ENCODE measurements at regions of chr16 and their contacts with region 1.

Region 1: DNA sequence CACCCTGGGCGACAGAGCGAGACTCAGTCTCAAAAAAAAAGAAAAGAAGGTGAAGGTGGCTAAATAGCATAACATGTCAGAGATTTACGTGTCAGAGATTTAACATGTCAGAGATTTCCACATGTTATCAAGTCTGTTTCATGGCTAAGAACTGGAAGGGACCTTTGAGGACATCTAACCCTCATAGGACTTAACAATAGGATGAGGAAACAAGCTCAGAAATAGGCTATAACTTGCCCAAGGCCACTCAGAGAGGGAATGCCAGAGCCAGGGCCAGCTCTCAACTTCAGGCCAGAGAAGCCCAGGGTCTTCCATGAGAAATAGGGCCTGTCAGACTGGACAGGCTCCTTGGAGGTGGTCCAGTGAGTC is 26.8 kb upstream of the ZNF629 start:
- DNase-seq: no peak
- ATAC-seq: peak; percentile 4
- H3K4me3 Mint-ChIP-seq: peak overlapping the region; percentile 87
- H3K27ac Mint-ChIP-seq: peak overlapping the region; percentile 81
- H3K4me1 Mint-ChIP-seq: peaks cover 12% of the 10 kb centered on the region
- H3K27me3 Mint-ChIP-seq: no peaks in the 10 kb centered on the region

Region 2: DNA sequence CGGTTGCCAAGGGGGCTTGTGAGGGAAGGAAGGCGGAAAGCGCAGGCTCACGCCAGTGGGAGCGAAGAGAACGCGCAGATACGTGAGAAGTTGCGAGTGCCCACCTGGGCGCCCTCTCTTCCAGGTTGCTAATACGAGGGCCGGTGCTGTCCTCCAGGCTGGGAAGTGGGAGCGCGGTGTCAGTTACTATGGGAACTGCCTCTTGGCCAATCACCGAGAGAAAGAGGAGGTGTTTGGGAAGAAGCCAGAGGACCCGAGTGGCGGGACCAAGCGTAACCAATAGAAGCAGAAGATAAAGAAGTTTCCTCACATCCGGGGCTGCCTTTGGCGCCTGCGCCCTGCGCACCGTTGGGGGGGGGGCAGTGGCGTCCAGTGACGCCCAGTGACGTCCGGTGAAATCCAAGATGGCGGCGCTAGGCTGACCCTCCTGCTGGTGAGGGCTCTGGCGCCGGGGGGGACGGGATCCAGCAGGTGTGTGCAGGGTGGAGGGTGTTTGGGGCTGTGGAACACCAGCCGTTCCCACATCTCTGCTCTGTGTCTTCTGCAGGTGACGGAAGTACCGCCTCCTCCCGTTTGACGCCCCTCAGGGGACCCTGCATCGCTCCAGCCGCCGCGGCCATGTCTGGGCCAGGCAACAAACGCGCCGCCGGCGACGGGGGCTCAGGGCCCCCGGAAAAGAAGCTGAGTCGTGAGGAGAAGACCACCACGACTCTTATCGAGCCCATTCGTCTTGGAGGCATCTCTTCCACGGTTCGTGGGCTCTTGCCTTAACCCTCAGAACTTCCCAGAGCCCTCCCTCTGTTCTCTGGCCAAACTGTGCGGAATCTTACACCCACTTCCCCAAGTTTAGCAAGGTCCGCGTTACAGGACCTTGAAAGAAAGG is 51.6 kb before region 1 on chr16 and contains the starts of genes CFAP119 and RNF40:
- CTCF ChIA-PET with region 1: no interaction called
- POLR2A ChIA-PET with region 1: interaction called, 3 read pairs
- intact Hi-C with region 1: loop called (anchors 1 to 10 kb)
- DNase-seq: peak; percentile 94
- ATAC-seq: peak; percentile 98
- H3K4me3 Mint-ChIP-seq: peak within 1 kb of the TSS; percentile 90
- H3K27ac Mint-ChIP-seq: peak within 1 kb of the TSS; percentile 83
- H3K4me1 Mint-ChIP-seq: peaks cover 25% of the 10 kb centered on the region
- H3K27me3 Mint-ChIP-seq: no peaks in the 10 kb centered on the region
- total RNA-seq, gene CFAP119: 1.7 to 3.1 TPM
- total RNA-seq, gene RNF40: 72.3 to 85.5 TPM

Region 3: DNA sequence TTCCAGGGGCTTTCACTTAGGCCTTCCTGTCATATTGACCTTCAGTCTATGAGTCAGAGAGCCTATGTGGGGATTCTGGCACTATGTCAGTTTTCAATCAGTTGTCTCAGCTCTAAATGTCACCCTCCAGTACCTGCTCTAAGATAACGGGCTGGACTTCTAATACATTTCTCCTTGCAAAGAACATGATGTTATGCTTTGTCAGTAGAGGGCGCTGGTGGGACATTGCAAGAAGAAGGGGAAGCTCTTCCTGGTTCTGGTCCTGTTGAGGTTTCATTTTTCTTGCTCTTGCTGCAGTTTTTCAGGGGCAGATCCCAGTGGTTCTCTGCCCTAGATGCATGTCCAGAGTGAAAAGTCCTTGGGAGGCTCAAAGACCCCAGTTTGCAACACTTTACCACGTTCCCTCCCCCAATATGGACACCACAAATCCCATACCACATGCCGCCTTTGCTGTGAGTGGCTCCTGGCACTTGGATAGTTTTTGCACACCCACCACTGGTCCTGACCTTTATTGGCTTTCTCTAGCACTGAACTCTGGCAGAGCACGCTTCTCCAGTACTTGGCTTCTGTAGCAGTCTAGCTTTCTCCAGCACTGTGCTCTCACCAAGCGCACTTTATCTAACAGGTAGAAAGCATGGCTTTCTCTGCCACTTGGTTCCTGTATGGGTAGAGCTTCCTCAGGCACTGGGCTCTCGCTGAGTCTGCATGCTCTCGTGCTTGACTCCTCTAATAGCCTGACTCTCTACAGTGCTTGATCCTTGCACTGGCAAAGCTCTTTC is 31.1 kb after region 1 on chr16:
- CTCF ChIA-PET with region 1: interaction called, 13 read pairs
- POLR2A ChIA-PET with region 1: no interaction called
- intact Hi-C with region 1: no loop called
- DNase-seq: peak; percentile 89
- ATAC-seq: peak; percentile 88
- H3K4me3 Mint-ChIP-seq: peak overlapping the region; percentile 45
- H3K27ac Mint-ChIP-seq: peak overlapping the region; percentile 58
- H3K4me1 Mint-ChIP-seq: peaks cover 8% of the 10 kb centered on the region
- H3K27me3 Mint-ChIP-seq: no peaks in the 10 kb centered on the region

Region 4: DNA sequence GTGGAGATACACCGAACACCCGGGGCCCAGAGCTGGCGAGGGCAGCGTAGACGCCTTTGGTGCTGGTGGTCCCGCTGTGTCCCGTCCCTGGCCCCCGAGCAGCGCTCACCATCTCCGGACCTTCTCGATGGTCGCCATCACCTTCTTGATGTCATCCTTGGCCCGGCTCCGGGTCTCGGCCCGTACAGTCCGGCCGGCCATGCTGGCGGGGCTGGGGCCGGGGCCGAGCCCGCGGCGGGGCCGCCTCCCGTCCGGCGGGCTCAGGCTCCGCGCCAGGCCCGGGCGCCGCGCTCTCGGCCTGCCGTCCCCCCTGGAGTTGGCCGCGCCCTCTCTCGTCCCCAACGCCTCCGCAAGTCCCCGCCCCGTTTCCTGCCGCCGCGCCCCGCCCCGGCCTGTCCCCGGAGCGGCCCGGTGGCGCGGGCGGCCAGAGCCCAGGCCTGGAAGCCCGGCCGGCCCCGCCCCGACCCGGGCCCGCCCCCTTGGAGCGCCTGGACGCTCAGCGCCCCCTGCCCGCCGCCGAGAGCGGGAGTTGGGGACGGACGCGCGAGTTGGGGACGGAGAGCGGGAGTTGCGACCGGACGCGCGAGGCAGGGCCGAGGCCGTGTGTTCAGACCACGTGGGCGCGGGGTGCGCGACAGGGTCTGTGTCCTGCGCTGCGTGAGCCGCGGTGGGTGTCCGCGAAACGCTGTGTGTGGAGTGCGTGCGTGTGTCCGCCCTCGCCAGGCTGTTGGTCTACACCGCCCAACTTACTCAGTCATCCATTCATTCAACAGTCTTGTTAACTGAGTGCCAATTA is 80.1 kb after region 1 on chr16 and contains the start of gene BCL7C:
- CTCF ChIA-PET with region 1: interaction called, 3 read pairs
- POLR2A ChIA-PET with region 1: no interaction called
- intact Hi-C with region 1: loop called in 1 of 2 experiments (anchors 1 kb)
- DNase-seq: peak; percentile 92
- ATAC-seq: peak; percentile 74
- H3K4me3 Mint-ChIP-seq: peak within 1 kb of the TSS; percentile 84
- H3K27ac Mint-ChIP-seq: peak within 1 kb of the TSS; percentile 88
- H3K4me1 Mint-ChIP-seq: peaks cover 35% of the 10 kb centered on the region
- H3K27me3 Mint-ChIP-seq: no peaks in the 10 kb centered on the region
- total RNA-seq, gene BCL7C: 19.5 to 20.4 TPM